Activated T-helper 1 cell treated with anti-CD3 and anti-CD28 coated beads, Interleukin-12 subunit alpha, Interleukin-12 subunit beta, Interleukin-2, Interleukin-4 antibody, amounts not matched to agents 30 ng/mL and 10 ng/mL and 1 ng/mL, durations not matched to agents 14 hours and 24 hours and 36 hours (primary cell): ENCODE measurements at regions of chr1 and their contacts with region 1.

Region 1: DNA sequence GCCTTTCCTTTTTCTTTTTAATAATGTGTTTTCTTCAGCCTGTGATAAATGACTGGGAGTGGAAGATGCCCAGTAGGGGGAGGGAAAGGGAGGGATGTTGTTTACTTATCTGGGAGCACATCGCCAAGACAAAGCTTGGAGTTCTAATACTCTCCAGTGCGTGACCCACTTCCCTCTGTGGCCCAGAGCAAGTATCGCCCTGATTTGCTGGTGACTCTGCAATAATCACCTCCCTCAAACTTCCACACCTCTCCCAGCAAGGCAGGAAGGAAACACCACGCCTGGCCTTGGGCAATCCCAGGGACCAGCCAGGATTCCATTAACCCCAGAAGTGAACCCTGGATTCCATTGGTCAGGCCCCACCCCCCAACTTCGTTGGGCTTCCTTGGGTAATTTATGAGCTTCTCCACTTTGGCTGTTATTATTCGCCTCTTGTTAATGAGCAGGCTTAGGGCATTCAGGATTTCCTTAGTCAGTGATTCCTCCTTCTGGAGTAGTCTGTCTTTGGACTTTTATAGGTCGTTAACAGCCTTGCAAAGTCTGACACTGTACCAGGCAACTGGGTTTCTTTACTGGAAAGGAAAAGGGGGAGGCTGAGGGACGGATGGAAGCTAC is 24.3 kb upstream of the GRHL3 start:
- DNase-seq: no peak
- H3K4me3 Mint-ChIP-seq: no peak overlapping the region
- H3K27ac Mint-ChIP-seq: no peak overlapping the region
- H3K4me1 Mint-ChIP-seq: no peaks in the 10 kb centered on the region
- H3K27me3 Mint-ChIP-seq: peaks cover 44% of the 10 kb centered on the region

Region 2: DNA sequence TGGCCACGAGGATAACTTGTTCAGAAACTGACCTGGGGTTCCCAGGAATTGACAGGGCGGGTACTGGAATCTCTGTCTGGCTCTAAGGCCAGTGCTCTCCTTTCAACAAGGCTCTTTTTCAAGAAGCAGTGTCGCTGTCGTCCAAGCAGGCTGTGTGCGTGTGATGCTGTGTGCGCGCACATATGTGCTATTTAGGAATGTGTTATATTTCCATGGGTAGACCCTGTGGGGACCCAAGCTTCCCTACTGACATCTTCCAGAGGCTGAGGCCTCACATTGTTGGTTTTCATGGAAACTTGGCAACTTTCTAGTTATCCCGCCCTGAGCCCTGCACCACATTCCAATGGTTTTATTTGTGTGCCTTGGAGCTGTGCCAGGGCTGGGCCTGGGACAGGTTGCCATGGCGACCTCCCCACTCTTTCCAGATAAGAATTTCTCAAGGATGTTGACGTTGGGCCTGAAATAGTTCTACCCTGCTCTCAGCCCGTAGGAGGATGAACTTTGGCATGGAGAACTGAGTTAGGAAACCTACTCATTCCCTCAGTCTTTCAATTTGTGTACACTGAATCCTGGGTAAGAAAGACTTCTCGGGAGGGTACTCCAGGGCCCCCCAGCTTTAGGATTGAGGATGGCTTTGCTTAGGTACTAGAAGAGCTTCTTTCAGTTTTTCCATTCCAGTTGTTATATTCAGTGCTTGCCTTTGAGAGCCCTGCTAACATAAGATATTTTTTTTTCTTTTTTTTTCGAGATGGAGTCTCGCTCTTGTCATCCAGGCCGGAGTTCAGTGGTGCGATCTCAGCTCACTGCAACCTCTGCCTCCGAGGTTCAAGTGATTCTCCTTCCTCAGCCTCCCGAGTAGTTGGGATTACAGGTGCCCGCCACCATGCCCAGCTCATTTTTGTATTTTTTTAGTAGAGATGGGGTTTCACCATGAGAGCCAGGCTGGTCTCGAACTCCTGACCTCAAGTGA is 276.0 kb before region 1 on chr1:
- intact Hi-C with region 1: no loop called
- DNase-seq: no peak
- H3K4me3 Mint-ChIP-seq: no peak overlapping the region
- H3K27ac Mint-ChIP-seq: no peak overlapping the region
- H3K4me1 Mint-ChIP-seq: no peaks in the 10 kb centered on the region
- H3K27me3 Mint-ChIP-seq: peaks cover 5% of the 10 kb centered on the region

Region 3: GRCh38 chr1:24228311-24228710 is 66.6 kb before region 1 on chr1:
- intact Hi-C with region 1: no loop called
- DNase-seq: no peak
- H3K4me3 Mint-ChIP-seq: no peak overlapping the region
- H3K27ac Mint-ChIP-seq: no peak overlapping the region
- H3K4me1 Mint-ChIP-seq: no peaks in the 10 kb centered on the region
- H3K27me3 Mint-ChIP-seq: peaks cover 8% of the 10 kb centered on the region

Region 4: GRCh38 chr1:24263746-24264145 is 31.1 kb before region 1 on chr1:
- intact Hi-C with region 1: loop called (anchors 2 kb)
- DNase-seq: no peak
- H3K4me3 Mint-ChIP-seq: no peak overlapping the region
- H3K27ac Mint-ChIP-seq: no peak overlapping the region
- H3K4me1 Mint-ChIP-seq: no peaks in the 10 kb centered on the region
- H3K27me3 Mint-ChIP-seq: peaks cover 9% of the 10 kb centered on the region